ENCODE measurements at regions of chr20 and their contacts with region 1.

Region 1: GRCh38 chr20:59605165-59606042 is 1.1 kb downstream of the PHACTR3 start:
- DNase-seq: no peak
- ATAC-seq: peak in 2 of 4 donors; percentile 36 to 72
- H3K4me3 ChIP-seq: peak overlapping the region in 11 of 12 donors; percentile 14 to 49 (median 35)
- H3K27ac ChIP-seq: no peak overlapping the region
- H3K4me1 ChIP-seq: peaks cover 0 to 19% (median 0%) of the 10 kb centered on the region in 12 donors
- H3K27me3 ChIP-seq: peaks cover 12 to 89% (median 59%) of the 10 kb centered on the region in 9 donors
- CTCF ChIP-seq: no peak
- POLR2A ChIP-seq: no peak

Region 2: GRCh38 chr20:59705651-59706399 is 100.4 kb after region 1 on chr20:
- intact Hi-C with region 1: loop called in 1 of 10 experiments (anchors 5 kb)
- DNase-seq: no peak
- ATAC-seq: no peak
- H3K4me3 ChIP-seq: no peak overlapping the region
- H3K27ac ChIP-seq: no peak overlapping the region
- H3K4me1 ChIP-seq: no peaks in the 10 kb centered on the region
- H3K27me3 ChIP-seq: peaks cover 0 to 22% (median 0%) of the 10 kb centered on the region in 9 donors
- CTCF ChIP-seq: no peak
- POLR2A ChIP-seq: no peak